ENCODE measurements at regions of chr7 and their contacts with region 1.

Region 1: DNA sequence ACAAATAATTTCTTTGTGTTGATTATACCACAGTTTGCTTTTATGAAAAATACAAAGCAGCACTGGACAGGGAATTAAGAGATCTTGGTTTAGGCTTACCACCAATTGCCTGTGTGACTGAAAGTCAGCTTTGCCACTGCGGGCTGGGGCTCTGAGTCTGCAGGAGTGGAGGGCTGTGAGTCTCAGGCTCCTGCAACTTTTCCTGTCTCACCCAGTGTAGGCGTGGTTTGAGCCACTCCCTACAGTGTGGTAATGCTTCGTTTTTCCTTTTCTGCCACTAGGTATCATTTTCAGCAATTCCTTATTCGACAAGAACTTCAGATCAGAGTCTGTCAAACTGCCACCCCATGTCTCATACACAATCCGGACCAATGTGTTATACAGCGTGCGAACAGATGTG is 180.6 kb downstream of the ABCA13 start:
- DNase-seq: no peak
- H3K4me3 ChIP-seq: no peak overlapping the region
- H3K27ac ChIP-seq: no peak overlapping the region
- H3K4me1 ChIP-seq: no peaks in the 10 kb centered on the region
- H3K27me3 ChIP-seq: no peaks in the 10 kb centered on the region
- CTCF ChIP-seq: no peak
- EP300 ChIP-seq: no peak
- POLR2A ChIP-seq: no peak

Region 2: GRCh38 chr7:48899932-48900331 is 548.0 kb after region 1 on chr7:
- intact Hi-C with region 1: no loop called
- DNase-seq: no peak
- H3K4me3 ChIP-seq: no peak overlapping the region
- H3K27ac ChIP-seq: no peak overlapping the region
- H3K4me1 ChIP-seq: no peaks in the 10 kb centered on the region
- H3K27me3 ChIP-seq: no peaks in the 10 kb centered on the region
- CTCF ChIP-seq: no peak
- EP300 ChIP-seq: no peak
- POLR2A ChIP-seq: no peak

Region 3: DNA sequence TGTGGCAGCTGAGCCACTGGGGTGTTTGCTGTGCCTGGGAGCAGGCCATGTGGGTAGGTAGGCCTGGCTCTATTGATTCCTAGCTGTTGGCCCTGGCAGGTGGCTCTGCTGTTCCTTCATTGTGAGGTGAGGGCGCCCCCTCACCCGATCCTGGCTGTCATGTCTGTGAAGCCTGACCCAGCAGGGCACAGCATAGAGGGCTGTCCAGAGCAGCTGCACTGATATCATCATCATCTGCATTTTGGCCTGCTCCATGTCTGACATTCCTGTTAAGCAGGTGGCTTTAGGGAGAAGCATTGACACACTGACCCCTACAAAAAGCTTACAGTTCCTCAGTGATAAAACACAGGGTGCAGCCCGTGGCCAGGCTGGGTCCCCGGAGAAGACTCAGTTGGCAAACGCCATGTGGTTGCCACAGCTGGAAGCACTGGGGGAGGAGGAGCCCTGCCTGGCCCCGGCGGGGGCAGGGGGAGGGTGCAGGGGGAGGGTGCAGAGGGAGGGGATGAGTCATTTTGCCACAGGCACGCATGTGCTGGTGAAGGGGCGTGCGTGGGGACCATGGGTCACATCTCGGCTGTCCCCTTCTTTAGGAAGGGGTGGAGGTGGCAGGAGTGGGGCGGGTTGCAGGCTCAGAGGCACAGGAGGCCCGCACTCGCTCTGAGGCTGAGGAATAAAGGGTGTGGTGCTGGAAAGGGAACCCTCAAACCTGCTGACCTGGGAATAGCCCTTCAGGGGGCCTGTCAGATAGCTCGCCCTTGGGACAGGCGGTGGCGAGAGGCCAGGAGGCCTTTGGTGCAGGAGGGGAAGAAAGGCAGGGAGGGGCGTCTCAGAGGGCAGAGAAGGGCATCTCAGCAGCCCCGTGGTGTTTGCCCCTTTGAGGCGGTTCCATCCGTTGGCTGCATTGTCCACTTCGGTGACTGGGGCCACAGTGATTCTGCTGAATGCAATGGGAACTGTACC is 1984.2 kb after region 1 on chr7:
- intact Hi-C with region 1: loop called in 1 of 4 experiments (anchors 10 kb)
- DNase-seq: no peak
- H3K4me3 ChIP-seq: no peak overlapping the region
- H3K27ac ChIP-seq: no peak overlapping the region
- H3K4me1 ChIP-seq: no peaks in the 10 kb centered on the region
- H3K27me3 ChIP-seq: no peaks in the 10 kb centered on the region
- CTCF ChIP-seq: no peak
- EP300 ChIP-seq: no peak
- POLR2A ChIP-seq: no peak